ENCODE measurements at regions of chr4 and their contacts with region 1.

Region 1: DNA sequence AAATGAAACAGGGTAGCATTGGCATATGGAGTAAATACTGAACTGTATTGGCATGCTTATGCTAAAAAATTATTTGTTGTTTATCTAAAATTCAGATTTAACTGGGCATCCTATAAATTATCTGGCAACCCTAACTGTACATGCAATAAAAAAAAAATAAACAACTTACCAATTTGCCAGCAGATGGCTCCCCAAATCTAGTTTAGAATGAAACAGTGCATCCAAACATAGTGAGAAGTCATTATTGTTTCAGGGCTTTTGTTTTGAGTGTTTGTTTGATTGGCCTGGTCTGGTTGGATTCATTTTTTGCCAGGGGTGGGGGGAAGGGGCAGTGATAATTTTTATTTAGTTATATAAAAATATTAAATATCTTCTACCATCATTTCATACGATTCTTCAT is 12.8 kb upstream of the NSUN7 start:
- DNase-seq: no peak
- ATAC-seq: no peak
- H3K4me3 ChIP-seq: no peak overlapping the region
- H3K4me1 ChIP-seq: no peaks in the 10 kb centered on the region
- CTCF ChIP-seq: no peak

Region 2: GRCh38 chr4:40897557-40898203 is 160.8 kb after region 1 on chr4:
- intact Hi-C with region 1: loop called in 1 of 2 experiments (anchors 10 kb)
- DNase-seq: peak; percentile 61 to 78 (median 68)
- ATAC-seq: peak; percentile 92
- H3K4me3 ChIP-seq: no peak overlapping the region
- H3K4me1 ChIP-seq: no peaks in the 10 kb centered on the region
- CTCF ChIP-seq: peak; percentile 59

Region 3: GRCh38 chr4:40933272-40934053 is 196.6 kb after region 1 on chr4:
- intact Hi-C with region 1: no loop called
- DNase-seq: no peak
- ATAC-seq: no peak
- H3K4me3 ChIP-seq: no peak overlapping the region
- H3K4me1 ChIP-seq: no peaks in the 10 kb centered on the region
- CTCF ChIP-seq: no peak

Measured in mucosa of descending colon (tissue), 3 donors.